Activated CD4-positive, alpha-beta memory T cell treated with anti-CD3 and anti-CD28 coated beads for 36 hours (primary cell): ENCODE measurements at regions of chr5 and their contacts with region 1.

Region 1: DNA sequence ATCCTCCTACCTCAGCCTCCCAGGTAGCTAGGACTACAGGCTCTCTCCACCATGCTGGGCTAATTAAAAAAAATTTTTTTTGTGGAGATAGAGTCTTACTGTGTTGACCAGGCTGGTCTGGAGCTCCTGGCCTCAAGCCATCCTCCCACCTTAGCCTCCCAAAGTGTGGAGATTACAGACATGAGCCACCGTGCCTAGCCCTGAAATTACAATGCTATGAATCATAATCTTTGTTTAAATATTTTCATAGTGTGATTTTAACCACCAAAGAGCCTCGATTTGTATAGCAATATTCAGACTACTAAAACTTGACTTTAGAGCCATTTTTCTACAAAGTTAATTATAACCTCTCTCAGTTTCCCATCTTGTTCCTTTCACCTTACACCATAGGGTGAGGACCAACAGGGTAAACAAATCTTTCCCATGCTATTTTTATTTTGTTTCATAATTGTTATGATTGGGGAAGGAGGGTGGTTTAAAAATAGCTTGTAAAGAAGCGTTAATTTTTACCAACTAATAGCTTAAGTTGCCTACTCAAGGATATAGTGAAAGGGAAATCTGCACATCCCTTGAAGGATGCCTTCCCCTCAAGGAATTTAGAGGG is 32.7 kb downstream of the UBE2D2 start:
- DNase-seq: peak; percentile 42
- H3K4me3 Mint-ChIP-seq: no peak overlapping the region
- H3K27ac Mint-ChIP-seq: peak overlapping the region; percentile 33
- H3K4me1 Mint-ChIP-seq: peaks cover 55% of the 10 kb centered on the region
- H3K27me3 Mint-ChIP-seq: no peaks in the 10 kb centered on the region

Region 2: GRCh38 chr5:139574641-139575312 is 19.0 kb before region 1 on chr5:
- CTCF ChIA-PET with region 1: interaction called, 3 read pairs
- POLR2A ChIA-PET with region 1: interaction called, 4 read pairs
- intact Hi-C with region 1: loop called (anchors 2 kb)
- DNase-seq: no peak
- H3K4me3 Mint-ChIP-seq: no peak overlapping the region
- H3K27ac Mint-ChIP-seq: peak overlapping the region; percentile 5
- H3K4me1 Mint-ChIP-seq: peaks cover 70% of the 10 kb centered on the region
- H3K27me3 Mint-ChIP-seq: no peaks in the 10 kb centered on the region

Region 3: GRCh38 chr5:139611703-139612584 is 18.1 kb after region 1 on chr5:
- CTCF ChIA-PET with region 1: interaction called, 5 read pairs
- POLR2A ChIA-PET with region 1: no interaction called
- intact Hi-C with region 1: loop called (anchors 2 kb)
- DNase-seq: peak; percentile 44
- H3K4me3 Mint-ChIP-seq: no peak overlapping the region
- H3K27ac Mint-ChIP-seq: peak overlapping the region; percentile 76
- H3K4me1 Mint-ChIP-seq: peaks cover 27% of the 10 kb centered on the region
- H3K27me3 Mint-ChIP-seq: no peaks in the 10 kb centered on the region

Region 4: GRCh38 chr5:140391312-140391711 is 797.5 kb after region 1 on chr5:
- CTCF ChIA-PET with region 1: no interaction called
- POLR2A ChIA-PET with region 1: no interaction called
- intact Hi-C with region 1: no loop called
- DNase-seq: no peak
- H3K4me3 Mint-ChIP-seq: no peak overlapping the region
- H3K27ac Mint-ChIP-seq: no peak overlapping the region
- H3K4me1 Mint-ChIP-seq: no peaks in the 10 kb centered on the region
- H3K27me3 Mint-ChIP-seq: no peaks in the 10 kb centered on the region